ENCODE measurements at regions of chr9 and their contacts with region 1.

Region 1: GRCh38 chr9:9790216-9790872 is 822.5 kb downstream of the PTPRD start:
- DNase-seq: peak; percentile 56
- H3K4me3 Mint-ChIP-seq: no peak overlapping the region
- H3K27ac Mint-ChIP-seq: no peak overlapping the region
- H3K4me1 Mint-ChIP-seq: no peaks in the 10 kb centered on the region
- H3K27me3 Mint-ChIP-seq: no peaks in the 10 kb centered on the region
- CTCF ChIP-seq: peak; percentile 20

Region 2: GRCh38 chr9:9754186-9754585 is 36.2 kb before region 1 on chr9:
- CTCF ChIA-PET with region 1: no interaction called
- intact Hi-C with region 1: no loop called
- DNase-seq: no peak
- H3K4me3 Mint-ChIP-seq: no peak overlapping the region
- H3K27ac Mint-ChIP-seq: peak overlapping the region; percentile 52
- H3K4me1 Mint-ChIP-seq: peaks cover 23% of the 10 kb centered on the region
- H3K27me3 Mint-ChIP-seq: no peaks in the 10 kb centered on the region
- CTCF ChIP-seq: no peak

Region 3: GRCh38 chr9:9893822-9894221 is 103.5 kb after region 1 on chr9:
- CTCF ChIA-PET with region 1: no interaction called
- intact Hi-C with region 1: no loop called
- DNase-seq: peak; percentile 6
- H3K4me3 Mint-ChIP-seq: no peak overlapping the region
- H3K27ac Mint-ChIP-seq: no peak overlapping the region
- H3K4me1 Mint-ChIP-seq: no peaks in the 10 kb centered on the region
- H3K27me3 Mint-ChIP-seq: no peaks in the 10 kb centered on the region
- CTCF ChIP-seq: no peak

Region 4: DNA sequence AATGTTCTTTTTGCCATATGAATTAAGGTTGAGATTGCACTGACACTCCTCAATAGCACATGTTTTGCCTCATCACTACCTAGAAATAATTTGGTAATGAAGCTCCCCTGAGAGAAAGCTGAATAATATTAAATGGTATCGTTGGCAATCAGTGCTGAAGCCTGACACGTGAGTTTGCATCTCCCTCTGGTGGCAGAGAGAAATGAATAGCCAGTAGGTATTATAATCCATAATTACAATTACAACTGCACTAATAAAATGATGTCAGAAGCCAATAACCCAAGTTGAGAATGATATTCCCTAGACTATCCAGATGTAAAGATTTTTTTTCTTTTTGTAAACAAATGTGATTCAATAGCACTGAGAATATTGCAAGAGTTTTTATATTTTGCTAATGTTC is 122.1 kb after region 1 on chr9:
- CTCF ChIA-PET with region 1: interaction called, 5 read pairs
- intact Hi-C with region 1: loop called (anchors 2 kb)
- DNase-seq: no peak
- H3K4me3 Mint-ChIP-seq: no peak overlapping the region
- H3K27ac Mint-ChIP-seq: no peak overlapping the region
- H3K4me1 Mint-ChIP-seq: no peaks in the 10 kb centered on the region
- H3K27me3 Mint-ChIP-seq: no peaks in the 10 kb centered on the region
- CTCF ChIP-seq: peak; percentile 12

Region 5: GRCh38 chr9:9942764-9943424 is 152.6 kb after region 1 on chr9:
- CTCF ChIA-PET with region 1: interaction called, 13 read pairs
- intact Hi-C with region 1: loop called (anchors 5 kb)
- DNase-seq: peak; percentile 68
- H3K4me3 Mint-ChIP-seq: no peak overlapping the region
- H3K27ac Mint-ChIP-seq: no peak overlapping the region
- H3K4me1 Mint-ChIP-seq: no peaks in the 10 kb centered on the region
- H3K27me3 Mint-ChIP-seq: no peaks in the 10 kb centered on the region
- CTCF ChIP-seq: peak; percentile 65

Measured in Calu3 (cell line).